ENCODE measurements at regions of chr21 and their contacts with region 1.

Region 1: DNA sequence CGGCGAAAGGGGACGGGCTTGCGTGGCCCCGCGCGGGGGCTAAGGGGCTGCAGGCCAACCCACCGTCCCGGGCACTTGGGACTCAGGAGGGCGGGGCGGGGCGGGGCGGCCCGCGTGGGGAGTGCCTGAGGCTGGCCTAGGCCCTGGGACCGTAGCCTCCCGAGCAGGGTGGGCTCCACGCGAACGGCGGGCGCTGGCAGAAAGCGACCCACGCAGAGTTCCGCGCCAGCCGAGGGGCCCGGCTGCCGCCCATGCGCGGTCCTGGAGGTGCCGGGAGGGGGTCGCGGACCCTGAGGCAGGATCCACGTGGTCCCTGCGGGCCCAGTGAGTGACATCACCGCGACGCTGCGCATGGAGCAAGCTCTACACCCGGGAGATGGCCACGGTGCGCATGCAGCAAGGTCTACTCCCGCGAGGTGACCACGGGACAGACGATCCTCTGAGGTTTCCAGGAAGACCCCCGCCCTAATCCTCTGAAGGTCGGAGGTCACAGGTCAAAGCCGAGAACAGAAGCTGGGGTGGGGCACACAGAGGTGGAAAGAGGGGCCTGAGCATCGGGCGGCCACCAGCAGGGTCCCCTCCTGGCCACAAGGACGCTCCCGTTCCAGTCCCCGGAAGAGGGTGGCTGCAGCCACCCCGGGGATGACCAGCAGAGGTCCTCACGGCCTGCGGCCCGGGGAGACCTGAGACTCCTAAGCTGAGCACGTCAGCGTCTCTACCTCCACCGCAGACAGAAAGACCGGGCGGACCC is 13.5 kb upstream of the SLC19A1 start:
- DNase-seq: peak; percentile 16
- H3K4me3 Mint-ChIP-seq: no peak overlapping the region
- H3K27ac Mint-ChIP-seq: no peak overlapping the region
- H3K4me1 Mint-ChIP-seq: peaks cover 28% of the 10 kb centered on the region
- H3K27me3 Mint-ChIP-seq: peaks cover 7% of the 10 kb centered on the region

Region 2: DNA sequence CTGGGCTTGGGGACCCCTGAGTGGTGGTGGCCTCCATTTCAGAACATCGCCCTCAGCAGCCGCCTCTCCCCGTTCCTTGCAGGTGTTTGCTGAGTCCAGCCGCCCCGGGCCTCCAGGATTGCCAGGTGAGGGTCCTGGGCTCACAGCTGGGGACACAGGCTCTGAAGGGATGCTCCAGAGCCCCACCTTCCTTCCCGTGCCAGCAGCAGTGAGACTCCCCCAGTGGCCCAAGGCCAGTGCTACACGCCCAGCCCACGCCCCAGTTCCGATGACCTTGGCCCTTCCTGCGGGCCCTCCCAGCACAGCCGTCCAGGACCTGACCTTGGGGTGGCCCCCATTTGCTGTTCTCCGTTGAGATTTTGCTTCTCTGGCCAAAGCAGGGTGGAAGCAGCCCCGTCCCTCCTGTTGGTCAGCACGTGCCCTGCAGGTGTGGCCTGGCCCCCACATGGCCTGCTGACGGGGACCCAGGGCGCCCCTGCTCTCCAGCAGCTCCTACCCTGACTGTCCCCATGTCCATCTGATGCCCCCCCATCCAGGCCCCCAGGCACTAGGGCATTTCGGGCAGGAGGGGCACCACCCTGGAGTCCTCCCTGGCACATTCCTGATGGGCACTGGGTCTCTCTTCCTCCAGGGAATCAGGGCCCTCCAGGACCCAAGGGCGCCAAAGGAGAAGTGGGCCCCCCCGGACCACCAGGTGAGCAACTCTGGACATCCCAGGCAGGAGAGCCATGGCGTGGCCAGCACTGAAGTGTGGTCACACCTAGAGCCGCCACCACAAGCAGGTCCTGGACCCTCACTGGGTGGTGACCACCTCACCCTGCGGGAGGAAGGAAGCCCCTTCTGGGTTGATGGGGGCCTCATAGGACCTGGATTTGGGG is 58.5 kb before region 1 on chr21:
- CTCF ChIA-PET with region 1: no interaction called
- POLR2A ChIA-PET with region 1: no interaction called
- DNase-seq: no peak
- H3K4me3 Mint-ChIP-seq: no peak overlapping the region
- H3K27ac Mint-ChIP-seq: no peak overlapping the region
- H3K4me1 Mint-ChIP-seq: peaks cover under 1% of the 10 kb centered on the region
- H3K27me3 Mint-ChIP-seq: no peaks in the 10 kb centered on the region

Region 3: GRCh38 chr21:45541289-45542039 is 14.3 kb before region 1 on chr21:
- CTCF ChIA-PET with region 1: interaction called, 3 read pairs
- POLR2A ChIA-PET with region 1: interaction called, 13 read pairs
- DNase-seq: peak; percentile 82
- H3K4me3 Mint-ChIP-seq: peak overlapping the region; percentile 65
- H3K27ac Mint-ChIP-seq: peak overlapping the region; percentile 65
- H3K4me1 Mint-ChIP-seq: peaks cover 20% of the 10 kb centered on the region
- H3K27me3 Mint-ChIP-seq: no peaks in the 10 kb centered on the region

Region 4: DNA sequence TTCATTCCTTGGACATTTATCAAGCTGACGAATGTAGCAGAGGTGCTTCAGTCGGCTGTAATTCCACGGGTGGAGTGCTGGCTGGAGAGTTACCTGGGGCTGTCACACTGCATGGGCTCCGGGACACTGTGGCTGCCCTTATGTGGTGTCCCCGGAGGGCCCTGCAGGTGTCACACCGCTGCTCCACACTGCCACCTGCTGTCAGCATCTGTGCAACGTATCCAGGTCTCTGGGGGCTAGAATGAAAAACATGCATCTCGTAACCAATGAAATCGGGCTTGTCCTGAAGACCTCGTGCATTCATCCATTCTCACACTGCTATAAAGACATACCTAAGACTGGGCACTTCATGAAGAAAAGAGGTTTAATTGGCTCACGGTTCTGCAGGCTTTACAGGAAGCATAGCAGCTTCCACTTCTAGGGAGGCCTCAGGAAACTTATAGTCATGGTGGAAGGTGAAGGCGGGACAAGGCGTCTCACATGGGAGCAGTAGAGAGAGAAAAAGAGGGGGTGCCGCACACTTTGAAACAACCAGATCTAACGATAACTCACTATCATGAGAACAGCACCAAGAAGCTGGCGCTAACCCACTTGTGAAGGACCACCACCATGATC is 41.1 kb after region 1 on chr21:
- CTCF ChIA-PET with region 1: interaction called, 16 read pairs
- POLR2A ChIA-PET with region 1: interaction called, 17 read pairs
- DNase-seq: peak; percentile 87
- H3K4me3 Mint-ChIP-seq: no peak overlapping the region
- H3K27ac Mint-ChIP-seq: no peak overlapping the region
- H3K4me1 Mint-ChIP-seq: peaks cover 15% of the 10 kb centered on the region
- H3K27me3 Mint-ChIP-seq: peaks cover 3% of the 10 kb centered on the region